ENCODE measurements at regions of chr1 and their contacts with region 1.

Region 1: GRCh38 chr1:21368515-21369289 is 71.2 kb upstream of the NBPF3 start:
- DNase-seq: peak; percentile 59
- H3K4me3 ChIP-seq: no peak overlapping the region
- H3K27ac ChIP-seq: no peak overlapping the region
- H3K4me1 ChIP-seq: peaks cover 4% of the 10 kb centered on the region
- H3K27me3 ChIP-seq: no peaks in the 10 kb centered on the region
- CTCF ChIP-seq: peak; percentile 96 to 100

Region 2: GRCh38 chr1:21216835-21217811 is 151.6 kb before region 1 on chr1:
- CTCF ChIA-PET with region 1: no interaction called
- dilution Hi-C with region 1: no loop called
- in situ Hi-C with region 1: no loop called
- intact Hi-C with region 1: loop called (anchors 1 kb)
- DNase-seq: peak; percentile 61
- H3K4me3 ChIP-seq: no peak overlapping the region
- H3K27ac ChIP-seq: no peak overlapping the region
- H3K4me1 ChIP-seq: peaks cover 2% of the 10 kb centered on the region
- H3K27me3 ChIP-seq: no peaks in the 10 kb centered on the region
- CTCF ChIP-seq: peak; percentile 75 to 76

Region 3: DNA sequence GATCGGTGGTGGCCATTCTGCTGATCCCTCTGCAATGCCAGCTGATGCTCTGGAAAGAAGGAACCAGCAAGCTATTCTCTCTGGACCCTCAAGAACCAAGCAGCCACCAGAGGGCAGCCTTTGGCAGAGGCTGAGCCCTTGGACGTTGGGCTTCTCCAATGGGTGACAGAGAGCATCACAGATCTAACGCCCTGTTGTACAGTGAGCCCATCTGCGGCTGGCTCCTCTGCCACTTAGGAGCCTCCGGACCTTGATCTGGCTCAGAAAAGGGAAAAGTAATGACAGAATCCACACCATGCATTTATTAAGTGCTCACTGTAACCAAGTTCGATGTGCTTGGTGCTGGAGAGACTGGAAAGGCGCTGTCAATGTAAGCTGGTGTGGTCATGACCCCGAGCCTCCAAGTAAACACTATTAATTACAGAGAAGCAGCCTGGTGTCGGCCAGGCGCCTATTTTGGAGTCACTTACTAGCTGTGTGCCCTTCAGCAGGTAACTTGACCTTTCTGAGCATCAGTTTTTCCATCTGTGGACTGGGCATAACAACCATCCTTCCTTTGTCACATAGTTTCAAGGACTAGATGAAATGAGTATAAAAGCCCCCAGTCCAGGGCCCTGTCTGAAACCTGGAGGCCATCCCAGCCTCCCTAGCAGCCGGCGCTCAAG is 113.3 kb before region 1 on chr1:
- CTCF ChIA-PET with region 1: interaction called, 15 read pairs
- dilution Hi-C with region 1: no loop called
- in situ Hi-C with region 1: loop called (anchors 5 kb)
- intact Hi-C with region 1: loop called (anchors 1 kb)
- DNase-seq: peak; percentile 72
- H3K4me3 ChIP-seq: no peak overlapping the region
- H3K27ac ChIP-seq: no peak overlapping the region
- H3K4me1 ChIP-seq: peaks cover 33% of the 10 kb centered on the region
- H3K27me3 ChIP-seq: no peaks in the 10 kb centered on the region
- CTCF ChIP-seq: peak; percentile 87 to 91

Region 4: GRCh38 chr1:21289700-21290545 is 78.8 kb before region 1 on chr1 and contains the start of gene ECE1:
- CTCF ChIA-PET with region 1: no interaction called
- dilution Hi-C with region 1: no loop called
- in situ Hi-C with region 1: no loop called
- intact Hi-C with region 1: no loop called
- DNase-seq: no peak
- H3K4me3 ChIP-seq: peak within 1 kb of the TSS; percentile 59 to 75 (median 65)
- H3K27ac ChIP-seq: peak within 1 kb of the TSS; percentile 37
- H3K4me1 ChIP-seq: peaks cover 20% of the 10 kb centered on the region
- H3K27me3 ChIP-seq: no peaks in the 10 kb centered on the region
- CTCF ChIP-seq: no peak
- total RNA-seq, gene ECE1: 86.3 to 153 TPM

Region 5: DNA sequence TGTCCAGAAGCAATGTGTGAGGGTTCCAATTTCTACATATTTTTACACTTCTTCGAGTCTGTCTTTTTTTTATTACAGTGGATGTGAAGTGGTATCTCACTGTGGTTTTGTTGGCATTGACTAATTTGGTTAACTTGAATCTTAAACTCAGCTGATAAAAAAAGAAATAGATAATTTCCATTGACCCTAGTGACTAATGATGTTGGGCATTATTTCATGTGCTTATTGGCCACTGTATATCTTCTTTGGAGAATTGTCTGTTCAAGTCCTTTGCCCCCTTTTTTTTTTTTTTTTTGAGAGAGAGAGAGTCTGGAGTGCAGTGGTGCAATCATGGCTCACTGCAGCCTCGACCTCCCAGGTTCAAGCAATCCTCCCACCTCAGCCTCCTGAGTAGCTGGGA is 38.0 kb after region 1 on chr1:
- CTCF ChIA-PET with region 1: no interaction called
- dilution Hi-C with region 1: no loop called
- in situ Hi-C with region 1: no loop called
- intact Hi-C with region 1: no loop called
- DNase-seq: no peak
- H3K4me3 ChIP-seq: no peak overlapping the region
- H3K27ac ChIP-seq: no peak overlapping the region
- H3K4me1 ChIP-seq: peaks cover 5% of the 10 kb centered on the region
- H3K27me3 ChIP-seq: no peaks in the 10 kb centered on the region
- CTCF ChIP-seq: no peak

Region 6: GRCh38 chr1:21439721-21440629 is 71.3 kb after region 1 on chr1 and contains the start of gene NBPF3:
- CTCF ChIA-PET with region 1: no interaction called
- dilution Hi-C with region 1: loop called (anchors 10 kb)
- in situ Hi-C with region 1: no loop called
- intact Hi-C with region 1: no loop called
- DNase-seq: peak; percentile 93
- H3K4me3 ChIP-seq: peak within 1 kb of the TSS; percentile 66 to 92 (median 84)
- H3K27ac ChIP-seq: peak within 1 kb of the TSS; percentile 49
- H3K4me1 ChIP-seq: peaks cover 8% of the 10 kb centered on the region
- H3K27me3 ChIP-seq: no peaks in the 10 kb centered on the region
- CTCF ChIP-seq: no peak
- total RNA-seq, gene NBPF3: 12.8 to 14.6 TPM

Region 7: GRCh38 chr1:21573971-21574465 is 205.3 kb after region 1 on chr1:
- CTCF ChIA-PET with region 1: interaction called, 3 read pairs
- dilution Hi-C with region 1: no loop called
- in situ Hi-C with region 1: no loop called
- intact Hi-C with region 1: loop called (anchors 1 kb)
- DNase-seq: peak; percentile 72
- H3K4me3 ChIP-seq: no peak overlapping the region
- H3K27ac ChIP-seq: no peak overlapping the region
- H3K4me1 ChIP-seq: peaks cover 14% of the 10 kb centered on the region
- H3K27me3 ChIP-seq: no peaks in the 10 kb centered on the region
- CTCF ChIP-seq: peak; percentile 55 to 74

Measured in mammary epithelial cell (primary cell).